Gastrocnemius medialis (tissue), 4 donors: ENCODE measurements at regions of chrX and their contacts with region 1.

Region 1: DNA sequence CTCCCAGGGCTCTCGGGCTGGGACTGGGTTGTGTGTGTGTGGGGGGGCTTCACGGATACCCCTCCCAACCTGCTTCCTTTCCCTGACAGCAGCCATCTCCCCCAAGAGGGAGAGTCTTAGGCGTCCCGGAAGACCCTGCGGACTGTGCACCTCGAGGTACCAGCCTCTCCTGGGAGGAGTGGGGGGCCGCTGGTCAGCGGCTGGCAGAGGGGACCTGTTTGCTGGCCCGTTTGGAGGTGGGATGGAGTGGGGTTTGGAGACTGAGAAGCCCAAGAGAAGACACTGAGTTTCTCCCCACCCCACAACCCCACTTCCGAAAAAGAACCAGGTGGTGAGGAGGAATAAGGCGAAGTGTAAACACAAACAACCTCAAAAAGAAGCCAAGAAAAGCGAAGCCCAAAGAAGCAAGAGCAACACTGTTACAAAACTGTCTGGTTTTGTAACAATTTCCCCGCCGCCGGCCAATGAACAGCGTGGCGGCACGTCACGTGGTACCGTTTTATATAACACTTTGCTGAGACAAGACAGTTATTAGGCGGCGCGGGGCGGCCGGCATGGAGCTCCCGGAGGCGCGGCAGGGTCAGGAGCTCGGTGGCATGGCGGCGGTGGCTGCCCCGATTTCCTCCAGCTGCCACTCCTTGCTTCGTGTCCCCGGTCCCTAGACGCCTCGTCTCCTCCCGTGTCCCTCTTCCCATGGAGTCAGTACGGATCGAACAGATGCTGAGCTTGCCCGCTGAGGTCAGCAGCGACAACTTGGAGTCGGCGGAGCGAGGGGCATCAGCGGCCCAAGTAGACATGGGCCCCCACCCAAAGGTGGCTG is at the start of gene LONRF3:
- DNase-seq: peak; percentile 73 to 85
- ATAC-seq: peak; percentile 61 to 65
- H3K4me3 ChIP-seq: peak within 1 kb of the TSS; percentile 69 to 82 (median 74)
- H3K27ac ChIP-seq: peak within 1 kb of the TSS; percentile 93 to 95 (median 93)
- H3K4me1 ChIP-seq: peaks cover 5 to 10% of the 10 kb centered on the region in 2 donors
- H3K27me3 ChIP-seq: no peaks in the 10 kb centered on the region
- CTCF ChIP-seq: no peak
- POLR2A ChIP-seq: peak; percentile 93 to 95
- total RNA-seq, gene LONRF3: 15.7 to 73.3 (median 42.3) TPM

Region 2: DNA sequence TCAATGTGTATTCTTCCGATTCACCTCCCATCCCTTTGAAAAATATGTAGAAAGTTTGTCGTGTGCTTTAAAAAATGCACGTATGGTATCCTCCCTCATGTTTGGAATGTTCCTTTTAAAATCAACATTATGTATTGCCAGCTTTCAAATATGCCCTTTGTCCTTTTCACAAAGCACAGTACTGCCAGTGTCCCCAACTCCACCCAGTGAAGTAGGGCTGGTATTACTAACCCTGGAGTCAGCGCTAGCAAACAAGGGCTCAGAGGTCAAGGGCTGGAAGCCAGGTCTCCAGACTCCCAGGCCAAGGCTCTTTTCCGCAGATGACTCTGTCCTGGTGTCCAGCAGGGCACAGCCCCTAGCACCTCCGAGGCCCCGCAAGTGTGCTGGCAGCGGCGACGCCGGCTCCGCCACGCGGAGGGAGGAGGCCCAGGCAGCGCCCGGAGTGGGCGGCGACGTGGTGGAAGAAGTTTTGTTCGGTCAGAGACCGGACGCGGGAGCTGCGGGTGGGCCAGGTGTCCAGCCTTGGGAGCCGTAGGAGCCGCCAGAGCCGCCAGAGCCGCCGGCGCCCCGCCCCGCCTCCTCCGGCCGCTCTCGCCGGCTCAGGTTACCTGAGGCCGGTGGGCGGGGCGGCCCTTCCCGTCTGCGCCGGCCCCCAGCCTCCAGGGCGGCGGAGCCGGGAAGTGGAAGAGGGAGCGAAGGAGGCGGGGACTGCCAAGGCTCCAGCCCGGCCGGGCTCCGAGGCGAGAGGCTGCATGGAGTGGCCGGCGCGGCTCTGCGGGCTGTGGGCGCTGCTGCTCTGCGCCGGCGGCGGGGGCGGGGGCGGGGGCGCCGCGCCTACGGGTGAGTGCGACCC is 247.2 kb before region 1 on chrX and contains the start of gene IL13RA1:
- in situ Hi-C with region 1: no loop called
- intact Hi-C with region 1: loop called (anchors 5 kb)
- DNase-seq: peak; percentile 46 to 81
- ATAC-seq: peak; percentile 83 to 85
- H3K4me3 ChIP-seq: peak within 1 kb of the TSS; percentile 55 to 69 (median 67)
- H3K27ac ChIP-seq: peak within 1 kb of the TSS; percentile 84 to 95 (median 88)
- H3K4me1 ChIP-seq: peaks cover 0 to 15% of the 10 kb centered on the region in 2 donors
- H3K27me3 ChIP-seq: no peaks in the 10 kb centered on the region
- CTCF ChIP-seq: no peak
- POLR2A ChIP-seq: peak; percentile 62 to 66
- total RNA-seq, gene IL13RA1: 20.8 to 25.0 (median 22.9) TPM

Region 3: DNA sequence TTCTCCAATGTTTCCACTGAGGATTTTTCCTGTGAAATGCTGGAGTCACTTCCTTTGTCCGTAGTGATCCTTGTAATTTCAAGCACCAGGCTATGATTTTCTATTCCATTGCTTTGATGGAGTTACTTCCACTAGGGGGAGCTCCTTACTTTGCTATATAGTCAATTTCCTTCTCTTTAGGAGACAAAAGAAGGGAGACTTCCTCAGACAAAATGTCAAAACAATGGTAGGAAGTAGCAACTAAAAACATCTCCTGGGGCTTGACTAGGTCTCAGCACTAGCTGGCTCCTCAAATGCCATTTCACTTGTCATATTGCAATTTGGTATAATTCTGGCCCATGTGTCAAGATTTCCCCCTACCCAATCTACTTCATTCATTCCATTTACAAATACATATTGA is 126.6 kb before region 1 on chrX:
- in situ Hi-C with region 1: loop called in 1 of 4 experiments (anchors 25 kb)
- intact Hi-C with region 1: loop called (anchors 5 kb)
- DNase-seq: no peak
- ATAC-seq: peak; percentile 73 to 89
- H3K4me3 ChIP-seq: no peak overlapping the region
- H3K27ac ChIP-seq: no peak overlapping the region
- H3K4me1 ChIP-seq: no peaks in the 10 kb centered on the region
- H3K27me3 ChIP-seq: no peaks in the 10 kb centered on the region
- CTCF ChIP-seq: peak in 4 of 5 experiments; percentile 33 to 68 (median 60)
- POLR2A ChIP-seq: no peak

Region 4: DNA sequence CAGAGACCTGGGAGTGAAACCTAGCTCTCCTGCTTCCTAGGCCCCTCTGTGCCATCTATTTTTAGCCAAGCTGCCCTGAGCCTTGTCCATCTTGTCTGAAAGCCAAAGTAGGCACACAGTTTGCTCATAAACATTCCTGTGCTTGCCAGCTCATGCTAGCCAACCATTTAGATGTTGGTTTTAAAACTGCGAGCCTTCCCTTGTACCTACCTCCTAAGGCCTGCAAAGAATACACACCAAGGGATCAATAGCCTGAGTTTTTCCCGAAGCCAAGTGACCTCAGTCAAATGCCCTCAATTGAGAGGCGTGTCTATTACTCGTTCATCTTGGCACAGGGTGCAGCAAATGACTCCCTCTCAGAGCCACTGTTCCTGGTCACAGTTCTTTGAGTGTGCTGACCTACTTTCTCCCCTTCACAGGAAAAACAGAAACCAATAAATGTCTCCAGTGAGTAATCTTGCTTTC is 102.2 kb before region 1 on chrX:
- in situ Hi-C with region 1: loop called in 2 of 4 experiments (anchors 10 to 25 kb)
- intact Hi-C with region 1: loop called (anchors 2 kb)
- DNase-seq: peak; percentile 32 to 59
- ATAC-seq: peak; percentile 97 to 98
- H3K4me3 ChIP-seq: peak overlapping the region in 1 of 4 donors; percentile 2
- H3K27ac ChIP-seq: peak overlapping the region; percentile 81 to 89 (median 89)
- H3K4me1 ChIP-seq: peaks cover 9 to 12% of the 10 kb centered on the region in 2 donors
- H3K27me3 ChIP-seq: no peaks in the 10 kb centered on the region
- CTCF ChIP-seq: no peak
- POLR2A ChIP-seq: no peak

Region 5: DNA sequence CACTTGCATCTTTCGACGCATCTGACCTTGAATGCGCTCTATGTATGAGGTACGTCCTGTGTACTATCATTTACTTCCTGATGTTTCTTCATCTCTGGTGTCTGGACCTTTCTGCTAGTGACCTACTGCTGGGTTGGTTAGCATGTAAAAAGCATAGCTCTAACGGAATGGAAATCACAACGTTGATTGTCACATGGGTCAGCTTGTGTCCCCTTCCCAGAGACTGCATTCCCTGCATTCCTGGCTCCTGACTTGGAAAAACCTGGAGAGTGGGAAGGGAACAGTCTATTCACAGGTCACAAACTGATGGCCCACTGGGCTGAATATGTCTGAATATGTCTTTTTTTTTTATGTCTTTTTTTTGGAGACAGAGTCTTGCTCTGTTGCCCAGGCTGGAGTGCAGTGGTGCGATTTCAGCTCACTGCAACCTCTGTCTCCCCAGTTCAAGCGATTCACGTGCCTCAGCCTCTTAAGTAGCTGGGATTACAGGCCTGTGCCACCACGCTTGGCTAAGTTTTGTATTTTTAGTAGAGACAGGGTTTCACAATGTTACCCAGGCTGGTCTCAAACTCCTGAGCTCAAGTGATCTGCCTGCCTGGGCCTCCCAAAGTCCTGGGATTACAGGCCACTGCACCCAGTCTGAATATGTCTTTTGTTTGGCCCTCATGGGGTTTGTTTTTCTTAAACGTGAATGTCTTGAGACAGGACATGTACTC is 16.4 kb after region 1 on chrX:
- in situ Hi-C with region 1: no loop called
- intact Hi-C with region 1: loop called (anchors 1 kb)
- DNase-seq: no peak
- ATAC-seq: no peak
- H3K4me3 ChIP-seq: no peak overlapping the region
- H3K27ac ChIP-seq: peak overlapping the region in 3 of 4 donors; percentile 31 to 69 (median 68)
- H3K4me1 ChIP-seq: peaks cover 7 to 8% of the 10 kb centered on the region in 2 donors
- H3K27me3 ChIP-seq: no peaks in the 10 kb centered on the region
- CTCF ChIP-seq: no peak
- POLR2A ChIP-seq: no peak